T-cell (primary cell): ENCODE measurements at regions of chr10 and their contacts with region 1.

Region 1: GRCh38 chr10:19431622-19432351 is 383.2 kb downstream of the MALRD1 start:
- DNase-seq: no peak
- ATAC-seq: no peak
- H3K4me3 ChIP-seq: no peak overlapping the region
- H3K4me3 Mint-ChIP-seq: no peak overlapping the region
- H3K27ac ChIP-seq: no peak overlapping the region
- H3K27ac Mint-ChIP-seq: no peak overlapping the region
- H3K4me1 ChIP-seq: no peaks in the 10 kb centered on the region
- H3K4me1 Mint-ChIP-seq: no peaks in the 10 kb centered on the region
- H3K27me3 ChIP-seq: no peaks in the 10 kb centered on the region
- H3K27me3 Mint-ChIP-seq: no peaks in the 10 kb centered on the region

Region 2: DNA sequence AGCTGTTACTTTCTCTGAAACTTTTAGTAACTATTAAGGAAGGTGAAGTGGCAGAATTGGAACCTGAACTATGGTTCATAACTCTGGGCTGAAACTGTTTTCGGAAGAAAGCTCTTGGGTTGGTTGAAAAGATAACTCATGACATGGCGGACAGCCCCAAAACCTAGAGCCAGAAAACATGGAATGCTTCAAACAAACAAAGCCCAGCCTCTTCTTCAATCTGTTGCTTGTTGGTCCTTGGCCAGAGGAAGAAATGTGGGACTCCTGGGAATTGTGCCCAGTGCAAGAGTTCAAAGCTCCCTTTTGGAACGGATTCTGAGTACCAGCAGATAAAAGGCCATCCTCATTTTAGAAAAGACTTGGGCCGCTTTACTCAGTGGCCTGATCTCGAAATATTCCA is 1344.4 kb before region 1 on chr10:
- CTCF ChIA-PET with region 1: interaction called in 1 of 2 experiments, 12 read pairs
- POLR2A ChIA-PET with region 1: no interaction called
- DNase-seq: no peak
- ATAC-seq: no peak
- H3K4me3 ChIP-seq: no peak overlapping the region
- H3K4me3 Mint-ChIP-seq: no peak overlapping the region
- H3K27ac ChIP-seq: no peak overlapping the region
- H3K27ac Mint-ChIP-seq: no peak overlapping the region
- H3K4me1 ChIP-seq: no peaks in the 10 kb centered on the region
- H3K4me1 Mint-ChIP-seq: no peaks in the 10 kb centered on the region
- H3K27me3 ChIP-seq: peaks cover 0 to 2% of the 10 kb centered on the region in 2 experiments
- H3K27me3 Mint-ChIP-seq: peaks cover 0 to 3% of the 10 kb centered on the region in 2 donors